Posterior vena cava (tissue), 2 donors: ENCODE measurements at regions of chr1 and their contacts with region 1.

Region 1: DNA sequence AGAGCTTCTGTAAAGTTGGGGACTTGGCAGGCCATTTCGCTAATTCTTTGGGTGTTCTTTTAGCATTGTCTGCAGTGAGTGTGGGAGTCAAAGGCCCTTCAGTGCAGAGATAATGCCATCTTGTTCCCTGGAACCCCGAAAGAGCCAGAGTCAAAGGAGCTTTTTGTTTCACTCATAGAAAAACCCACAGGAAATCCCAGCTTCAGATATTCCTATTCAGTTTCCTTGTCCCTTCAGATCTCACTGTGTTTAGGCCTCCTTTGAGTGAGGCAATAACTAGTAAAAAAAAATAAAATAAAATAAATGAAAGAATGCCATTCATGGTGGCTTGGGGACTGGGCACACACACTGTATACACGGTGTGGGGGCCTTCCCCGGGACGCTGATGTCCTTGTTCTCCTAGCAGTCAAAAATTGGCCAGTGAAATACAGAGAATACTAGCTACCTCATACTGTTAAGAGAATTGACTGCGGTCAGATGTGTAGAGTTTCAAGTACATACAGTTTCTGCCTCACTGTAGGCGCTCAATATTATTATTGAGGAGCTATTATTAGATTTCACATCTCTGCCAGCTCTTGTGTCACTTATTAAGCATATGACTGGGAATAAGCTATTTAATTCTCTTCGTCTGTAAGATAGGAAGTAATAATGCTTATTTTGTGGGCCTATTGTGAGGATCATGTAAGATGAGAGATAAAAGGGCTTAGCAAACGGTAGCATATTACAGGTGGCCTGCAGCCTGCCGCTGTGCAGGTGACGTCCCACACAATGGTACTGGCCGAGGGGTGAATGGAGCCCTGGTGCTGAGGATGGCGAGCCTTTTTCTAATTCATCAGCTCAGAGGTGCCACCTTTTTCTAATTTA is 16.7 kb downstream of the DISC1 start:
- DNase-seq: no peak

Region 2: DNA sequence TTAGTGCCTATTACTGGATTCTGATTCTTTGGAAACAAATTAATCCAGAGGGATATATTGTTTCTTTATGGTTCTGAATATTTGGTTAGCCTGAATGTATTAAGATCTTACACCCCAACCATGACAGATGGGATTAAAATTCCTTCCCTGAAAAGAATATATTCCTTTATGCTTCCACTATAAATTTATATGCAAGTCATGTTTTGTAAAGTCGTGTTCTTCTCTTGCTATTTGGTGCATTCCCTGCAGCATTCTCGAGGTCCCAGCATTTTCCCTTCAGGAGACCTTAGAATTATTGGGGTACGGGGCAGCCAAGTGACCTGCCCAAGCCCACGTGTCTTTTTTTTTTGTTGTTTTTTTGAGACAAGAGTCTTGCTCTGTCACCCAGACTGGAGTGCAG is 45.7 kb after region 1 on chr1:
- intact Hi-C with region 1: loop called in 1 of 2 experiments (anchors 2 kb)
- DNase-seq: no peak